ENCODE measurements at regions of chr6 and their contacts with region 1.

Region 1: DNA sequence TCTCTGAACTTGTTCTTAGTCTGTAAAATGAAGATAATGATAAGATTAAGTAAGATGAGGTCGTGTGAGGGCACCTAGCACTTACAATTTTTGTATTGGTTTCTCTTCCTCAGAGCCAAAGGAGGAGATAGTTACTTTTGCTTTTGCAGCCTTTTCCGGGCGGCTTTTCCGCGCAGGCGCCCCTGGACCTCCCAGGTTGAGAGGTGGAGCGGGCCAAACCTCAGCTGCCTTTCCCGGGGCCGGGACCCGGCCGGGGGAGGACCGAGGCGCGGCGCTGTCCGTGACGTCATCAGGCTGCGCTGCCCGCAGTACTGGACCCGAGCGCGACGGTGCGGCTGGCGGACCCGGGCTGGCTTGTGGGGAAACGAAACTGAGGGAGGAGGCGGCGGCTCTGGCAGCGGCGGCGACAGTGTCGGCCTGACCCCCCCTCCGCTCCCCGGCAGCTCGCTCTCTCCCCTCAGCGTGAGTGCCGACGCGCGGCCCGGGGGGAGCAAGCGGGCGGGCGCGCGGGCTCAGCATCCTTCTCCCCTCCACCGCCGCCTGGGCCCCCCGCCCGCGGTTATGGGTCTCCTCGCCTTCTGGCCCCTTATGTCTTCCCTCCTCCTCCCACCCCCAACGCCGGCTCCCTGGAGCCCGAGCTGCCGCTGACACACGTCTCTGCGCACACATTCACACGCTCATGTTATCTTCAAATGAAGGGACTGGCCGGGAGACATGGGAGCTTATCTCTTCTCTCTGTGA is at the start of gene CMTR1:
- DNase-seq: peak; percentile 97
- ATAC-seq: peak; percentile 95
- H3K4me3 Mint-ChIP-seq: peak within 1 kb of the TSS; percentile 92
- H3K27ac Mint-ChIP-seq: peak within 1 kb of the TSS; percentile 98
- H3K4me1 Mint-ChIP-seq: peaks cover 47% of the 10 kb centered on the region
- H3K27me3 Mint-ChIP-seq: peaks cover 10% of the 10 kb centered on the region
- total RNA-seq, gene CMTR1: 71.7 to 74.2 TPM

Region 2: DNA sequence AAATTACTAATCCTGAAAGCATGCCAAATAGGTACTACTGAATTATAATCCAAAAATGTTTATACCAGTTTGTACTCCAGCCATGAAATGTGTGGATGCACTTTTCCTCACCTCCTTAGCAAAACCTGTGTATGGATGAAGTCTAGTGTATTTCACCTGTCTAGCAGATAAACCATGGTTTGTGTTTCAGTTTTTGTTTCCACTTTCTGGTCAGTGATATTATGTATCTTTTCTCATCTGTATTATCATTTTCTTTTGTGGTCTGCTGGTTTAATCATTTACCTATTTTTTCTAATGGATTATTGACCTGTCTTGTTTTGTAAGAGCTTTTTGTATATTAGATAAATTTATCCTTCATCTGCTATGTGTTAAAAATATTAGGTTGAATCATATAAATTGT is 134.1 kb before region 1 on chr6:
- CTCF ChIA-PET with region 1: no interaction called
- POLR2A ChIA-PET with region 1: no interaction called
- DNase-seq: no peak
- ATAC-seq: no peak
- H3K4me3 Mint-ChIP-seq: no peak overlapping the region
- H3K27ac Mint-ChIP-seq: no peak overlapping the region
- H3K4me1 Mint-ChIP-seq: peaks cover 2% of the 10 kb centered on the region
- H3K27me3 Mint-ChIP-seq: no peaks in the 10 kb centered on the region

Region 3: GRCh38 chr6:37499433-37500293 is 66.6 kb after region 1 on chr6 and contains the start of gene CCDC167:
- CTCF ChIA-PET with region 1: no interaction called
- POLR2A ChIA-PET with region 1: interaction called, 13 read pairs
- DNase-seq: peak; percentile 99
- ATAC-seq: peak; percentile 87
- H3K4me3 Mint-ChIP-seq: peak within 1 kb of the TSS; percentile 97
- H3K27ac Mint-ChIP-seq: peak within 1 kb of the TSS; percentile 98
- H3K4me1 Mint-ChIP-seq: peaks cover 77% of the 10 kb centered on the region
- H3K27me3 Mint-ChIP-seq: no peaks in the 10 kb centered on the region
- total RNA-seq, gene CCDC167: 64.0 to 69.4 TPM